K562 (cell line): ENCODE measurements at regions of chr6 and their contacts with region 1.

Region 1: GRCh38 chr6:31827286-31828079 is at the start of gene HSPA1B:
- DNase-seq: peak; percentile 99 to 100 (median 100)
- ATAC-seq: peak; percentile 86
- H3K4me3 ChIP-seq: peak within 1 kb of the TSS; percentile 56
- H3K27ac ChIP-seq: peak within 1 kb of the TSS; percentile 78
- H3K4me1 ChIP-seq: peaks cover 41% of the 10 kb centered on the region in 2 experiments
- H3K27me3 ChIP-seq: no peaks in the 10 kb centered on the region
- CTCF ChIP-seq: peak in 1 of 3 experiments; percentile 15; a peak in 2 of 6 replicates
- EP300 ChIP-seq: peak; percentile 89
- POLR2A ChIP-seq: peak; percentile 100
- RAD21 ChIP-seq: peak; percentile 34 to 39; a peak in 2 of 4 replicates
- polyA plus RNA-seq, gene HSPA1B: 0.27 to 0.62 TPM

Region 2: GRCh38 chr6:31332637-31333602 is 494.6 kb before region 1 on chr6:
- CTCF ChIA-PET with region 1: no interaction called
- POLR2A ChIA-PET with region 1: no interaction called
- in situ Hi-C with region 1: no loop called
- intact Hi-C with region 1: no loop called
- DNase-seq: no peak
- ATAC-seq: no peak
- H3K4me3 ChIP-seq: no peak overlapping the region
- H3K27ac ChIP-seq: no peak overlapping the region
- H3K4me1 ChIP-seq: no peaks in the 10 kb centered on the region
- H3K27me3 ChIP-seq: no peaks in the 10 kb centered on the region
- CTCF ChIP-seq: no peak
- EP300 ChIP-seq: no peak
- POLR2A ChIP-seq: no peak
- RAD21 ChIP-seq: no peak

Region 3: GRCh38 chr6:31453259-31453658 is 374.2 kb before region 1 on chr6:
- CTCF ChIA-PET with region 1: no interaction called
- POLR2A ChIA-PET with region 1: no interaction called
- in situ Hi-C with region 1: no loop called
- intact Hi-C with region 1: no loop called
- DNase-seq: no peak
- ATAC-seq: no peak
- H3K4me3 ChIP-seq: no peak overlapping the region
- H3K27ac ChIP-seq: no peak overlapping the region
- H3K4me1 ChIP-seq: no peaks in the 10 kb centered on the region
- H3K27me3 ChIP-seq: peaks cover 0 to 7% of the 10 kb centered on the region in 2 experiments; a peak in 3 of 5 replicates
- CTCF ChIP-seq: no peak
- EP300 ChIP-seq: no peak
- POLR2A ChIP-seq: no peak
- RAD21 ChIP-seq: no peak

Region 4: GRCh38 chr6:31546962-31547726 is 280.3 kb before region 1 on chr6 and contains the start of gene NFKBIL1:
- CTCF ChIA-PET with region 1: interaction called, 4 read pairs
- POLR2A ChIA-PET with region 1: interaction called, 4 read pairs
- in situ Hi-C with region 1: no loop called
- intact Hi-C with region 1: loop called (anchors 2 kb)
- DNase-seq: peak; percentile 92 to 100 (median 94)
- ATAC-seq: peak; percentile 93
- H3K4me3 ChIP-seq: peak within 1 kb of the TSS; percentile 52
- H3K27ac ChIP-seq: peak within 1 kb of the TSS; percentile 81
- H3K4me1 ChIP-seq: peaks cover 10 to 14% of the 10 kb centered on the region in 2 experiments; a peak in 4 of 5 replicates
- H3K27me3 ChIP-seq: no peaks in the 10 kb centered on the region
- CTCF ChIP-seq: no peak; a peak in 1 of 6 replicates
- EP300 ChIP-seq: peak; percentile 37; the same call in 1 of the 2 replicates
- POLR2A ChIP-seq: peak; percentile 71
- RAD21 ChIP-seq: peak in 1 of 2 experiments; percentile 14; a peak in 1 of 4 replicates
- polyA plus RNA-seq, gene NFKBIL1: 0.49 to 0.59 TPM

Region 5: GRCh38 chr6:31689249-31690110 is 138.0 kb before region 1 on chr6:
- CTCF ChIA-PET with region 1: no interaction called
- POLR2A ChIA-PET with region 1: interaction called, 12 read pairs
- in situ Hi-C with region 1: no loop called
- intact Hi-C with region 1: loop called (anchors 2 kb)
- DNase-seq: peak in 2 of 4 experiments; percentile 66 to 72
- ATAC-seq: peak; percentile 60
- H3K4me3 ChIP-seq: no peak overlapping the region; the same call in 1 of the 2 replicates
- H3K27ac ChIP-seq: peak overlapping the region; percentile 88
- H3K4me1 ChIP-seq: peaks cover 63 to 65% of the 10 kb centered on the region in 2 experiments
- H3K27me3 ChIP-seq: no peaks in the 10 kb centered on the region
- CTCF ChIP-seq: peak; percentile 63 to 96 (median 68)
- EP300 ChIP-seq: no peak
- POLR2A ChIP-seq: no peak
- RAD21 ChIP-seq: peak in 1 of 2 experiments; percentile 45; a peak in 2 of 4 replicates

Region 6: GRCh38 chr6:31769684-31770371 is 57.7 kb before region 1 on chr6:
- CTCF ChIA-PET with region 1: interaction called, 10 read pairs
- POLR2A ChIA-PET with region 1: interaction called, 38 read pairs
- in situ Hi-C with region 1: no loop called
- intact Hi-C with region 1: loop called (anchors 1 kb)
- DNase-seq: peak; percentile 98 to 100 (median 100)
- ATAC-seq: peak; percentile 91
- H3K4me3 ChIP-seq: no peak overlapping the region
- H3K27ac ChIP-seq: peak overlapping the region; percentile 26; the same call in 2 of the 3 replicates
- H3K4me1 ChIP-seq: peaks cover 24 to 68% of the 10 kb centered on the region in 2 experiments
- H3K27me3 ChIP-seq: no peaks in the 10 kb centered on the region
- CTCF ChIP-seq: peak; percentile 98 to 100 (median 99)
- EP300 ChIP-seq: peak; percentile 28
- POLR2A ChIP-seq: no peak
- RAD21 ChIP-seq: peak; percentile 99 to 100

Region 7: GRCh38 chr6:31806465-31807272 is 20.8 kb before region 1 on chr6 and contains the start of gene LSM2:
- CTCF ChIA-PET with region 1: no interaction called
- POLR2A ChIA-PET with region 1: interaction called, 93 read pairs
- in situ Hi-C with region 1: no loop called
- intact Hi-C with region 1: no loop called
- DNase-seq: peak; percentile 100
- ATAC-seq: peak; percentile 98
- H3K4me3 ChIP-seq: peak within 1 kb of the TSS; percentile 66
- H3K27ac ChIP-seq: peak within 1 kb of the TSS; percentile 86
- H3K4me1 ChIP-seq: peaks cover 14 to 30% of the 10 kb centered on the region in 2 experiments
- H3K27me3 ChIP-seq: no peaks in the 10 kb centered on the region
- CTCF ChIP-seq: peak; percentile 20 to 66 (median 36); a peak in 5 of 6 replicates
- EP300 ChIP-seq: peak; percentile 32; the same call in 1 of the 2 replicates
- POLR2A ChIP-seq: peak; percentile 97
- RAD21 ChIP-seq: peak; percentile 28 to 42; a peak in 3 of 4 replicates
- polyA plus RNA-seq, gene LSM2: 405 to 407 TPM

Region 8: DNA sequence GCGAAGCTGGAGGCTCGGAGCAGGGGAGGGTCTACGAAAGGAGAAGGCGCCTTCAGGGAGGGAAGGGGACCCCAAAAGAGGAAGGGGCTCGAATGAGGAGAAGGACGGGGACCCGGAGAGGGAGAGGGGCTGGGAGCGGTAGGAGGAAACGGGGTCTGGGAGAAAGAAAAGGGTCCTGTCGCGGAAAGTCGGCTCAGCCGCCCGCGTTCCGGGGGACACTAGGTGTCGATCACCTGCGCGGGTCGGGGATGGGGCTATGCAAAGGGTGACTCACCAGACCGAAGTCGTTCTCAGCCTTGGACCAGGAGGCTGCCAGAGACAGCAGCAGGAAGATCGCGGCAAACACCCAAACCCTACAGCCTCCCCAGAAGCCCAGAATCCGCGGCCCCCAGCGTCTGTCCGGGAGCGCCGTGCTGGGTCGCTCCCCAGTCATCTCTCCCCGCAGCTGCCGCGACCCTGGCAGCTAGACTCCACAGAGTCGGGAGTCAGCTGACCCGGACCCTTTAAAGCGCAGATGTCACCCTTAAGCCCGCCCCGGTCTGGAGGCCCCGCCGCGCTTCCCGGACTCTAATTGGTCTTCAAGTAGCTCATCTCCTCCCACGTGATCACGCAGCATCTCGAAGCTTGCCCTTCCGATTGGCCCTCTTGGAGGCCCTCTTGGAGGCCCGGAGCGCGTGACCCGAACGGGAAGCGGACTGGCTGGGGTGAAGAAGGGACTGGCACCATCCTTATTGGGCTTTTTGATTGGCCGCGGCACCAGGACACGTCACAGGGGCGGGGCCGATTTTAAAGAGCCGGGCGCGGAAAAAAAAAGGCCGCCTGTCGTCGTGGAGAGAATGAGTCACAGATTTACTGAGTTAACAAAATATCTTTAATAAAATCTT is 35.1 kb after region 1 on chr6 and contains the start of gene NEU1:
- CTCF ChIA-PET with region 1: no interaction called
- POLR2A ChIA-PET with region 1: interaction called, 14 read pairs
- in situ Hi-C with region 1: no loop called
- intact Hi-C with region 1: no loop called
- DNase-seq: peak; percentile 100
- ATAC-seq: peak; percentile 98
- H3K4me3 ChIP-seq: peak within 1 kb of the TSS; percentile 62
- H3K27ac ChIP-seq: peak within 1 kb of the TSS; percentile 73
- H3K4me1 ChIP-seq: peaks cover 13 to 43% of the 10 kb centered on the region in 2 experiments; a peak in 4 of 5 replicates
- H3K27me3 ChIP-seq: no peaks in the 10 kb centered on the region
- CTCF ChIP-seq: peak in 1 of 3 experiments; percentile 3; a peak in 1 of 6 replicates
- EP300 ChIP-seq: peak; percentile 38
- POLR2A ChIP-seq: peak; percentile 98
- RAD21 ChIP-seq: peak; percentile 19 to 32; a peak in 1 of 4 replicates
- polyA plus RNA-seq, gene NEU1: 14.8 to 20.6 TPM

Region 9: DNA sequence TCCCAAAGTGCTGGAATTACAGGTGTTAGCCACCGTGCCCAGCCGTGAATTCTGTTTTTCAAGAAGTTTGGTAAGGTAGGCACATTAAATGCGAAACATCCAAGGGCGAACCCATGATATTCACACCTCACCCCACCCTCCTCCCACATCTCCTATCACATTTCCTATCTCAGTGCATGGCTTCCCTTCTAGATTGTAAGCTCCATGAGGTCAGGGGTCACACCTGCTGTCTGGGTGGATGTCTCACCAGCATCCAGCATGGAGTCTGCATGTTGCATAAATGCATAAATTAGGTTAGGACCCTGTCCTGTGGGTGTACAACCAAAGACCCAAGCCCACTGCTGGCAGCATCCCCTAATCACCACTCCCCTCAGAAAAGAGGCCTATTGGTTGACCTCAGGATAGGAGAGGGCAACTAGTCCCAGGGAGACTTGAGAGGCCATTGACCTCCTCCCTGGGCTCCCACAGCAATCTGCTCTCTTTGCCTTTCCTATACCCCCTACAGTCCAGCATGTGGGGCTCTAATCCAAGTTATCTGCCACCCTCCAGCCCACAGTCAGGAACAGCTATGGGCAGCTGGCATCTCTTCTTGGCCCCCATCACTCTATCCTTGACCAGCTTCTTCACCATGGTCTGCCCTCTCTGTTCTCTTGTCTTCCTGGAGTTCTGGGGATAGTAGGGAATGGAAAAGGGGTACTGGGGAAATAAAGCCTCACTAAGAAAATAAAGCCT is 320.1 kb after region 1 on chr6:
- CTCF ChIA-PET with region 1: no interaction called
- POLR2A ChIA-PET with region 1: no interaction called
- in situ Hi-C with region 1: no loop called
- intact Hi-C with region 1: no loop called
- DNase-seq: no peak
- ATAC-seq: no peak
- H3K4me3 ChIP-seq: no peak overlapping the region
- H3K27ac ChIP-seq: no peak overlapping the region
- H3K4me1 ChIP-seq: peaks cover 16 to 30% of the 10 kb centered on the region in 2 experiments
- H3K27me3 ChIP-seq: no peaks in the 10 kb centered on the region
- CTCF ChIP-seq: peak in 2 of 3 experiments; percentile 8 to 19; a peak in 1 of 6 replicates
- EP300 ChIP-seq: no peak
- POLR2A ChIP-seq: no peak
- RAD21 ChIP-seq: no peak; a peak in 1 of 4 replicates